Activated CD4-positive, alpha-beta memory T cell treated with anti-CD3 and anti-CD28 coated beads, Interleukin-2, amount 10 ng/mL, durations not matched to agents 7 days and 5 days (primary cell): ENCODE measurements at regions of chr20 and their contacts with region 1.

Region 1: GRCh38 chr20:37095599-37096414 is at the start of gene RBL1:
- DNase-seq: peak; percentile 89
- H3K4me3 Mint-ChIP-seq: peak within 1 kb of the TSS; percentile 95
- H3K27ac Mint-ChIP-seq: peak within 1 kb of the TSS; percentile 99
- H3K4me1 Mint-ChIP-seq: peaks cover 48% of the 10 kb centered on the region
- H3K27me3 Mint-ChIP-seq: peaks cover 2% of the 10 kb centered on the region
- total RNA-seq, gene RBL1: 45.2 to 45.6 TPM

Region 2: DNA sequence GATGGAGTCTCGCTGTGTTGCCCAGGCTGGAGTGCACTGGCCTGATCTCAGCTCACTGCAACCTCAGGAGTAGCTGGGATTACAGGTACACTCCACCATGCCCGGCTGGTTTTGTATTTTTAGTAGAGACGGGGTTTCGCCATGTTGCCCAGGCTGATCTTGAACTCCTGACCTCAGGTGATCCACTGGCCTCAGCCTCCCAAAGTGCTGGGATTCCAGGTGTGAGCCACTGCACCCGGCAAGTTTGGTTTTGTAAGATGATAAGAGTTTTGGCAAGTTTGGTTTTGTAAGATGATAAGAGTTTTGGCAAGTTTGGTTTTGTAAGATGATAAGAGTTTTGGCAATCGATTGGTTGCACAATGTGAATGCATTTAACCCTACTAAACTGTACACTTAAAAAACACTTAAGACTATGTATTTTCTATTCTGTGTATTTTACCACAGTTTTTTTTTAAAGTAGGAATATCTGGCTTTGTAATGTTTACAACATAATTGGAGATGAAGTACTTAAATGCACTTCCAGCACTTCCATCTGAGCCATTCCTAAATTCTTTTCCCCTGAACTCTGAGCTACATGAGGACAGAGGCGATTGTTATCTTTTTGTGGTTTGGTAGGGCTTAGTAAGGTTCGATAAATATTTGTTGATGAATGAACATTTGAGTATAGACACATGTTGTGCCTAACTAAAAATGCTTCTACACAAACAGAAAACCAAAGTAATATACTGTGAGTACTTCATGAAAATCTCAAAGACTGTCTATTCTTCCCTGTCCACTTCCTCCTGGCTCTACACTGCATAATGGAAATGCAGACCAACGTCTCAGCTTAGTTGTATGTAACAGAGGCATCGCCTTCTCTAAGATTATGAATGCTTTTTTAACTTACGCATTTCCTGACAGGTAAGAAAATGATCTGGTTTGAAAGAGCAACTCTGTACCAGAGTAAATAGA is 163.1 kb before region 1 on chr20:
- CTCF ChIA-PET with region 1: no interaction called
- POLR2A ChIA-PET with region 1: interaction called, 11 read pairs
- DNase-seq: no peak
- H3K4me3 Mint-ChIP-seq: no peak overlapping the region
- H3K27ac Mint-ChIP-seq: peak overlapping the region; percentile 64
- H3K4me1 Mint-ChIP-seq: peaks cover 57% of the 10 kb centered on the region
- H3K27me3 Mint-ChIP-seq: no peaks in the 10 kb centered on the region

Region 3: GRCh38 chr20:36988494-36988966 is 107.3 kb before region 1 on chr20:
- CTCF ChIA-PET with region 1: no interaction called
- POLR2A ChIA-PET with region 1: no interaction called
- DNase-seq: no peak
- H3K4me3 Mint-ChIP-seq: no peak overlapping the region
- H3K27ac Mint-ChIP-seq: peak overlapping the region; percentile 38
- H3K4me1 Mint-ChIP-seq: peaks cover 21% of the 10 kb centered on the region
- H3K27me3 Mint-ChIP-seq: no peaks in the 10 kb centered on the region

Region 4: GRCh38 chr20:37042986-37043972 is 52.5 kb before region 1 on chr20:
- CTCF ChIA-PET with region 1: interaction called, 3 read pairs
- POLR2A ChIA-PET with region 1: interaction called, 62 read pairs
- DNase-seq: peak; percentile 69
- H3K4me3 Mint-ChIP-seq: peak overlapping the region; percentile 80
- H3K27ac Mint-ChIP-seq: peak overlapping the region; percentile 100
- H3K4me1 Mint-ChIP-seq: peaks cover 41% of the 10 kb centered on the region
- H3K27me3 Mint-ChIP-seq: no peaks in the 10 kb centered on the region

Region 5: GRCh38 chr20:37081717-37082289 is 14.0 kb before region 1 on chr20:
- CTCF ChIA-PET with region 1: interaction called, 5 read pairs
- POLR2A ChIA-PET with region 1: interaction called, 35 read pairs
- DNase-seq: peak; percentile 25
- H3K4me3 Mint-ChIP-seq: no peak overlapping the region
- H3K27ac Mint-ChIP-seq: no peak overlapping the region
- H3K4me1 Mint-ChIP-seq: peaks cover 27% of the 10 kb centered on the region
- H3K27me3 Mint-ChIP-seq: no peaks in the 10 kb centered on the region

Region 6: DNA sequence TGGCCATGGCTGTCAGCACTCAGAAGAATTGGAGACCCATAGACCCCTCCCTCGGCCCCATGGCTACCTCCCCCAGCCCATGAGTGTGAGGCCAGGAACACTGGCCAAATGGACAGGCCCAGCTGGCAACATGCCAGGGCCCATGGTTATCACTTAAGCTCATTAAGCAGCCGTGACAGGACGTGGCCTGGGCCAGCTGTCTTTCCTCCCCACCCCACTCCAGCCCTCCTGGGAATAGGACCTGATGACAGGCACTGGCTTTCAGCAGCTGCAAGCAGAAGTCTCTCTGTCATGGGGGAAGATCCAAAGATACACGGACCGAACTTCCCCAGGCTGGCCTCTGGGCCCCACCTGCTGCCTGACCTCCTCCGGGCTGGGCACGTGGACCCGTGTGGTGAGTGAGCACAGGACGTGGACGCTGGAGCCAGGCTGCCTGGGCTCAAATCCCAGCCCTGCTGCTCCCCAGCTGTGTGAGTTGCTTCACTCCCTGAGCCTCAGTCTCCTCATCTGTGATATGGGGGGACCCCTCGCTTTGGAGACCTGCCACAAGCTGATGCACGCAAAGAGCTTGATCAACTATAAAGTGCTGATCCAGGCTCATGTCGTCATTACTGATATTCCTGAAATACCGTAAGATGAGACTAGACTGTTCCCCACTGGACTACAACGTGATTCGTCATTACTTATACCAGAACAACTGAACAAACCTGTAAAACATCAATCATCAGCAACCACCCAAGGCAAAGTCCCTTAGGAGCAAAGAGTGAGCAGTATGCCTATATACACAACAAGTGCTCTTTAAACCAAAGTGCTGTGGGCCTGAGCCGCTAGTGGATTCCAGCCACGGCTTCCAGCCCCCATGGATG is 785.2 kb after region 1 on chr20:
- CTCF ChIA-PET with region 1: no interaction called
- POLR2A ChIA-PET with region 1: no interaction called
- DNase-seq: no peak
- H3K4me3 Mint-ChIP-seq: no peak overlapping the region
- H3K27ac Mint-ChIP-seq: no peak overlapping the region
- H3K4me1 Mint-ChIP-seq: no peaks in the 10 kb centered on the region
- H3K27me3 Mint-ChIP-seq: no peaks in the 10 kb centered on the region